ENCODE measurements at regions of chr10 and their contacts with region 1.

Region 1: GRCh38 chr10:44386546-44387052 is 1.7 kb upstream of the CXCL12 start:
- DNase-seq: peak; percentile 81
- ATAC-seq: peak; percentile 85

Region 2: GRCh38 chr10:43671656-43672531 is 714.7 kb before region 1 on chr10:
- intact Hi-C with region 1: loop called (anchors 5 kb)
- DNase-seq: no peak
- ATAC-seq: peak; percentile 71

Region 3: GRCh38 chr10:44310762-44311562 is 75.6 kb before region 1 on chr10:
- intact Hi-C with region 1: loop called (anchors 5 kb)
- DNase-seq: peak; percentile 93
- ATAC-seq: peak; percentile 99

Region 4: GRCh38 chr10:44857363-44858016 is 470.9 kb after region 1 on chr10:
- intact Hi-C with region 1: loop called (anchors 5 kb)
- DNase-seq: peak; percentile 83
- ATAC-seq: peak; percentile 90